ENCODE measurements at regions of chr2 and their contacts with region 1.

Region 1: DNA sequence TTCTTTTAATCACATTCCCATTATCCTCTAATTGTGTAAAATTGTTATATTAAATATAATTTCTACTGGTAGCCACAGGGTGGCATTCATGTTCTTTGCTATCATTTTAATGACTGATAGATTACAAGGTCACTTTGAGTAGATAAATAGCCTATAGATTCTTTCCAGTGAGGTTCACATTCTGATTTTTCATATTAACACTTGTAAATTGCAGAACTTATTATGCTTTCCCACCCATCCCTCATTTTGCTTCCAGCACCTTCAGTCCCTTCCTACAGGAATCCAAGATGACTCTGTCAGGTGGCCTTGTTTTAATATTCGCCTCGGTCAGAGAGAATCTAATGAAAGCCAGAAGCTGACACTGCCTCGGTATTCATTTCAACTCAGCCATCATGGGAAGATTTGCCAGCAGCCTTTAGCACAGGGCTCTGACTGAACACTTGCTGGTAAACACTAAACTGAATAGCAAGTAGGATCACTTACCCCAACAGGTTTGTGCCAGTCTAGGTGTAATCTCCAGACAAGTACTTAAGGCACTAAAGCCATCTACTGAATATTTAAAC is 101.2 kb upstream of the FSHR start:
- DNase-seq: no peak
- ATAC-seq: no peak

Region 2: DNA sequence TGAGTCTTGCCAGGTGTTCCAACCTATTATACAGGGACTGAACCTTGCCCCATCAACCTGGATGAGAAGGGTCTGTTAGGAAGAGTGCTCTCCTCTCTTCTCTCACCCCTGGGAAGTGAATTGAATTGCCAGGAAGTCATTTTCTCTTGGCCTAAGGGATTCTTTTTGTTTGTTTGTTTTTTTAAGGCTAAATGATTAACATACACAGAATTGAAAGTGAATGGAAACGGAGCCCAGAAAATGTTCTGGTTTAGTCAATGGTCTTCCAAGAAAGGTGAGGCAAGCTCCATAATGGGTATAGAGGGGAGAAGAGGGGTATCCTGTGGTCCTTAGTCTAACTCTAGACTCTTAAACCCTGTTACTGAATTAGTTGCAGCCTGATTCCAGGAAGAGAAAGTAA is 290.3 kb before region 1 on chr2:
- intact Hi-C with region 1: no loop called
- DNase-seq: no peak
- ATAC-seq: no peak

Region 3: DNA sequence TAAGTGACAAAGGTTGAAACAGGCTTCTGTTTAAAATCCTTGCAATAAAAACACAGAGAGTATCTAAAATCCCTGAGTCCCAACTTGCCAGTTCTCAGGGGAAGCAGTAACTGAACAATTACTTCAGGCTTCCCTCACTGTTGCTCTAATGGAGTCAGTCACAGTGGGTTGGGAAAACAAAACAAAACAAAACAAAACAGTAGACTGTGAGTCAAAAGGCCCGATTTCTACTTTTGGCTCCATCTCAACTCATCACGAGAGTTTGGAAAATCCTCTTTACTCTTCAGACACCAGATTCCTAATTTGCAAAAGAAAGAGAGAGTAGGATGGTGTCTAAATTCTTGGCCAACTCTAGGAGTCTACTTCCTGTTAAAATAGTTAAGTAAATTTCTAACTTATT is 102.2 kb before region 1 on chr2:
- intact Hi-C with region 1: no loop called
- DNase-seq: no peak
- ATAC-seq: peak in 1 of 2 donors; percentile 61

Region 4: DNA sequence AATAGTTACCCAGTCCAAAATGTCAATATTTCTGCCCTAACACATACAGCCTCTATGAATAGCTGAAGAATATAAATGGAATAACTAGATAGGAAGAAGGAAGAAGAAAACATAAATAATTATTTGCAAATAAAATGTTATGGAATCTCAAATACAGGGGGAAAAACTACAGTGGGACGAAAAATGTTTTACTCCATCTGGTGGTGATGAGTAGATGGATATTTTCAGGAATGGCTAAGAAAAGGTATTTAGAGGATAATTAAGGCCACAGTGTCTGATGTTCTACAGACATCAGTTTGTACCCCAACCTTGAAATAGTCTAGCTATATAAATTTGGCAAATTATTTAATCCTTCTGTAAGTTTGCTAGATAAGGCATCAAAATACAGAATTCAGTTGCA is 76.9 kb after region 1 on chr2:
- intact Hi-C with region 1: loop called in 1 of 2 experiments (anchors 5 kb)
- DNase-seq: no peak
- ATAC-seq: no peak

Region 5: GRCh38 chr2:50133766-50134165 is 878.3 kb after region 1 on chr2:
- intact Hi-C with region 1: loop called in 1 of 2 experiments (anchors 10 kb)
- DNase-seq: no peak
- ATAC-seq: no peak